Lower leg skin (tissue), 4 donors: ENCODE measurements at regions of chr6 and their contacts with region 1.

Region 1: DNA sequence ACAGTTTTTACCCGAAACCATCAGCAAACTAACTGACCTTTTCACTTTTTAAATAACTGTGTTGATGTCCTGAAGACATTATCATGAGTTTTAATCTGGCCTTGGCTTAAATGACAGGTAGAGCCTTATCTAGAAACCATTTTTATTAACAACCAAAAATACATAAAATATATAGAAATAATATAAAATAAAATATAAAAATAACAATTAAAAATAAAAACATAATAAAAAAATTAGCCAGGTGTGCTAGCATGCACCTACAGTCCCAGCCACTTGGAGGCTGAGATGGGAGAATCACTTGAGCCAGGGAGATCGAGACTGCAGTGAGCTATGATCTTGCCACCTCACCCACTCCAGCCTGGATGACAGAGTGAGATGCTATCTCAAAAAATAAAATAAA is 21.6 kb downstream of the HMGN3 start:
- DNase-seq: no peak
- H3K4me3 ChIP-seq: no peak overlapping the region
- CTCF ChIP-seq: no peak
- POLR2A ChIP-seq: no peak

Region 2: DNA sequence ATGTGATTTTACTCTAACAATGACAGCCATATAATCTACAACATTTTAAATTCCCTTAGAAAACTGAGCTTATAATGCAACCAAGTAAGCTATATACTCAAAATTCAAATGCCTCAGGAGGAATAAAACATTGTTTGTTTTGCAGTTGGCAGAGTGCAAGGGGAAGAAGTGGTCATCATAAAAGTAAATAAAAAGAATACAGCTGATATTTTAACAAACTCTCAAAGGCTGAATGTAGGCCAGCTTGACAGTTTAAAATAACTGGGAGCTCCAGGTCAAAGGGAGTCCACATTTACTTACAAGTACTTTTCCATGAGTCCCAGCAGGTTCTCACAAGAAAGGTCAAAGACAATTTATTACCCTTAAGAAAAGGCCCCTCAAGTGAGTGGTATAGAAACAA is 1483.4 kb after region 1 on chr6:
- intact Hi-C with region 1: loop called (anchors 5 kb)
- DNase-seq: no peak
- H3K4me3 ChIP-seq: no peak overlapping the region
- CTCF ChIP-seq: no peak
- POLR2A ChIP-seq: no peak